CD8-positive, alpha-beta T cell (primary cell): ENCODE measurements at regions of chr5 and their contacts with region 1.

Region 1: GRCh38 chr5:43484106-43484849 is 613 bp upstream of the TMEM267 start:
- DNase-seq: peak; percentile 72 to 92 (median 86)
- ATAC-seq: peak; percentile 67
- H3K4me3 ChIP-seq: peak overlapping the region; percentile 76 to 97
- H3K4me3 Mint-ChIP-seq: peak overlapping the region; percentile 98
- H3K27ac ChIP-seq: peak overlapping the region; percentile 96 to 99
- H3K27ac Mint-ChIP-seq: peak overlapping the region; percentile 100
- H3K4me1 ChIP-seq: peaks cover 30% of the 10 kb centered on the region
- H3K4me1 Mint-ChIP-seq: peaks cover 53% of the 10 kb centered on the region
- H3K27me3 ChIP-seq: no peaks in the 10 kb centered on the region
- H3K27me3 Mint-ChIP-seq: no peaks in the 10 kb centered on the region
- CTCF ChIP-seq: peak; percentile 73

Region 2: GRCh38 chr5:41869739-41870626 is 1614.3 kb before region 1 on chr5 and contains the start of gene OXCT1:
- CTCF ChIA-PET with region 1: no interaction called
- POLR2A ChIA-PET with region 1: no interaction called
- intact Hi-C with region 1: loop called (anchors 5 to 10 kb)
- DNase-seq: peak; percentile 87 to 97 (median 93)
- ATAC-seq: peak; percentile 94
- H3K4me3 ChIP-seq: peak within 1 kb of the TSS; percentile 90 to 98
- H3K4me3 Mint-ChIP-seq: peak within 1 kb of the TSS; percentile 92
- H3K27ac ChIP-seq: peak within 1 kb of the TSS; percentile 87 to 90
- H3K27ac Mint-ChIP-seq: peak within 1 kb of the TSS; percentile 98
- H3K4me1 ChIP-seq: peaks cover 24% of the 10 kb centered on the region
- H3K4me1 Mint-ChIP-seq: peaks cover 48% of the 10 kb centered on the region
- H3K27me3 ChIP-seq: no peaks in the 10 kb centered on the region
- H3K27me3 Mint-ChIP-seq: no peaks in the 10 kb centered on the region
- CTCF ChIP-seq: no peak
- total RNA-seq, gene OXCT1: 16.1 to 19.8 TPM

Region 3: DNA sequence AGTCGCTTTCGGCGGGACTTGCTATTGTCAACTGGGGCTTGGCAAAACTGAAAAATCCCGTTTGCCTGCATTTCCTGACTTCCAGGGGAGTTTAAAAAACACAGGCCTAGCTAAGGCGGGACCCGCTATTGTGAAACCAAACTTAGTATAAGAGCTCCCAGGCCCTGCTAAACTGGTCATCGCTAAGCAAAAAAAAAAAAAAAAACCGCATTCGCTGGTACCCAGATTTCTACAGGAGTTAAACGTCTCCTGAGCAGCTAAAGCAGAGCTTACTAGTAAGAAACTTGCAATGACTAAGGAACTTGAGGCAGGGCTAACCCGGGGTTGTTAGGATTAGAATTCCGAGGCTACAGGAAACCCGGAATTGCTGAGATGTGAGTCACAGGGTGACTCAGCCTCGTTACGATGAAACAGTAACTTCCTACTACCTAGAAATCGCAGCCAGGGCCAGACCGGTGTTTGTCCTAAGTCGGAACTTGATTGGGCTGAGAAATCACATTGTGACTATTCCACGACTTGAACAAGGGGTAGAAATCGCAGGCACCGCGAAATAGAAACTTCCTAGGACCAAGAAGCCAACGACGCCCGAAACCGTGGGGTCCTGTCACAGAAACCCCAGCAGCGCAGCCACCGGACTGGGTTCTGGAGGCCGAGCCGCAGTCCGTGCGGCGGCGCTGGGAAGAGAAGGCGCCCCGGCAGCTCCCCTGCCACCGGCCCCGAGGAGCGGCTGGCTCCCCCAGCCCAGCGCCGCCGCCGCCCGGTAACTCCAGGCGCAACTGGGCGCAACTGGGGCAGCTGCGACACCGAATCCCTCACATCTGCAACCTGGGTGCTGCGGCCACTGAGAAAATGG is 533.6 kb before region 1 on chr5:
- CTCF ChIA-PET with region 1: interaction called, 3 read pairs
- POLR2A ChIA-PET with region 1: interaction called, 17 read pairs
- intact Hi-C with region 1: no loop called
- DNase-seq: peak; percentile 26 to 90 (median 72)
- ATAC-seq: peak; percentile 43
- H3K4me3 ChIP-seq: peak overlapping the region; percentile 72 to 83
- H3K4me3 Mint-ChIP-seq: peak overlapping the region; percentile 94
- H3K27ac ChIP-seq: peak overlapping the region; percentile 93 to 94
- H3K27ac Mint-ChIP-seq: peak overlapping the region; percentile 99
- H3K4me1 ChIP-seq: peaks cover 20% of the 10 kb centered on the region
- H3K4me1 Mint-ChIP-seq: peaks cover 34% of the 10 kb centered on the region
- H3K27me3 ChIP-seq: no peaks in the 10 kb centered on the region
- H3K27me3 Mint-ChIP-seq: no peaks in the 10 kb centered on the region
- CTCF ChIP-seq: no peak

Region 4: DNA sequence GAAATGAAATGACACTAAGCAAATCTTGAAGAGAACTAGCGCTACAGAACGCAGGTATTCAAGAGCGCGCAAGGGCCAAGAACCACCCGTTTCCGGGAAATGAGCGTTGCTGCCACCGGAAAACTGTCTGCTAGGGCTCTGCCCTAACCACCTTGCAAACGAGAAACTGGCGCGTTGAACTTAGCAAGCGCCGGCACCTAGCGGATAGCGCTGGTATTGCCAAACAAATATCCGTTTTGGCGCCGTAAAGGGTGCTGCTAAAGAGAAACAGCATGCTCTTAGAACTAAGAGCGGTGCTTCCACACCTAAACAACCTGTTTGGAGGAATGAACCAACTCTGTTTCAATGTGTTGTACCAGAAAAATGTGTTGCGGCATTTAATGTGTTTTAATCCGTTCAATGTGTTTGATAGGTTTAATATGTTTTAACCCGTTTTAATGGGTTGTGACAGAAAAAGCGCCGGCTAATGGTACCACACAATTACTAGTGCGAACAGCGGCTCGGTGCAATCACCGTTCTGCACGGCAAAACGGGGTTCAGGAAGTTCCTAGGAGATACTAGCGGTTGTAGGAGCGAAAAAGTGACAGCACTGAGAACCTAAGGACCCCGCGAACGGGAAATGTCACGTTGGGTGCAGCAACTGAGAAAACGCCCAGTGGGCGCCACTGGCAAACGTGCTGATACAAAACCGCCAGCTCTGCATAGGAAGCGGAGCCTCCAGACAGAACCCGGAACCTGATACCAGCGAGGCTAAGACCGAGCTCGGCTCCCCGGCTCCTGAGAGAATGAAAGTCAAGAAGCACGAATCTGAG is 443.8 kb before region 1 on chr5 and contains the start of gene ANXA2R:
- CTCF ChIA-PET with region 1: interaction called, 3 read pairs
- POLR2A ChIA-PET with region 1: interaction called, 38 read pairs
- intact Hi-C with region 1: loop called in 1 of 2 experiments (anchors 1 kb)
- DNase-seq: peak; percentile 88 to 98 (median 93)
- ATAC-seq: peak; percentile 58
- H3K4me3 ChIP-seq: peak within 1 kb of the TSS; percentile 86 to 87
- H3K4me3 Mint-ChIP-seq: peak within 1 kb of the TSS; percentile 93
- H3K27ac ChIP-seq: peak within 1 kb of the TSS; percentile 93 to 94
- H3K27ac Mint-ChIP-seq: peak within 1 kb of the TSS; percentile 98
- H3K4me1 ChIP-seq: peaks cover 27% of the 10 kb centered on the region
- H3K4me1 Mint-ChIP-seq: peaks cover 56% of the 10 kb centered on the region
- H3K27me3 ChIP-seq: no peaks in the 10 kb centered on the region
- H3K27me3 Mint-ChIP-seq: no peaks in the 10 kb centered on the region
- CTCF ChIP-seq: peak; percentile 79
- total RNA-seq, gene ANXA2R: 38.2 to 39.5 TPM

Region 5: DNA sequence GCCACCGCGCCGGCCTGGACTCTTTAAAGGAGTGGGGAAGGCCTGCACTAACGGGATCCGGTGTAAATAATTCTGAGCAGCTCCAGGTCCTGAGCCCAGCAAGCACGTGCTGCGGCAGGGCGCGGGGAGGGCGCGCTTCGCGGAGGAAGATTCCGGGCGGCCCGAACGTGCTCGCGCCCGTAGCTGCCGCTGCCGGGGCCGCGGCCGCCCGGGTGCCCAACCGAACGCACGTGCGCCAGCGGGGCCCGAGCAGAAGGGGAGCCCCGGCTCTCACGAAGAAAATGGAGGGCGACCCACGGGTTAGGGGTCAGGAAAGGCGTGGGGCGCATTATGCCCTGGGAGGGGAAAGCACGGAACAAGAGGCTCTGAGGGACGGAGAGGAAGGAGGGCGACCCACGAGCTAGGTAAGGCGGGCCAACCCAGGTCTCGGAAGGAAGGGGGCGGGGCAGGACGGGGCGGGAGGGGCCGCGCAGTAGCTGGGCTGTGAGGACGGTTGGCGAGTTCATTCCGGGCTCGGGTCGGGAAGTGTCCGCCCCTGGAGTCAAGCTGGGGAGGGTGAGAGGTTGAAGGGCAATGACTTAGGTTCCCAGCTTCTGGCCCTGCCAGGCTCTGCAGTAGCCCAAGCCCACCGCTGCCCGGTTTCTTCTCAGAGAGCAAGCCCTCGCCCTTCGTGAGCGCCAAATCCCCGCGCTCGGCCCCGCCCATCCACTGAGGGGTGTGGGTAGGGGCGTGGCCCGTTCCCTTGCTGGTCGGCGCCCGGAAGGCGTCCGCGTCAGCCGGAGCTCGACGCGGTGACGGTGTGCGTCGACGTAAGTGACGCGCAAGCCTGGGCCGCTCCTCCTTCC is 363.3 kb before region 1 on chr5 and contains the start of gene ZNF131:
- CTCF ChIA-PET with region 1: interaction called, 6 read pairs
- POLR2A ChIA-PET with region 1: interaction called, 63 read pairs
- intact Hi-C with region 1: loop called (anchors 1 to 2 kb)
- DNase-seq: peak; percentile 95 to 99 (median 97)
- ATAC-seq: peak; percentile 87
- H3K4me3 ChIP-seq: peak within 1 kb of the TSS; percentile 74 to 82
- H3K4me3 Mint-ChIP-seq: peak within 1 kb of the TSS; percentile 96
- H3K27ac ChIP-seq: peak within 1 kb of the TSS; percentile 87 to 98
- H3K27ac Mint-ChIP-seq: peak within 1 kb of the TSS; percentile 98
- H3K4me1 ChIP-seq: peaks cover 34% of the 10 kb centered on the region
- H3K4me1 Mint-ChIP-seq: peaks cover 39% of the 10 kb centered on the region
- H3K27me3 ChIP-seq: no peaks in the 10 kb centered on the region
- H3K27me3 Mint-ChIP-seq: no peaks in the 10 kb centered on the region
- CTCF ChIP-seq: no peak
- total RNA-seq, gene ZNF131: 76.7 to 84.9 TPM

Region 6: GRCh38 chr5:43453606-43454005 is 30.7 kb before region 1 on chr5:
- CTCF ChIA-PET with region 1: no interaction called
- POLR2A ChIA-PET with region 1: interaction called, 11 read pairs
- intact Hi-C with region 1: no loop called
- DNase-seq: no peak
- ATAC-seq: no peak
- H3K4me3 ChIP-seq: no peak overlapping the region
- H3K4me3 Mint-ChIP-seq: no peak overlapping the region
- H3K27ac ChIP-seq: no peak overlapping the region
- H3K27ac Mint-ChIP-seq: no peak overlapping the region
- H3K4me1 ChIP-seq: no peaks in the 10 kb centered on the region
- H3K4me1 Mint-ChIP-seq: no peaks in the 10 kb centered on the region
- H3K27me3 ChIP-seq: no peaks in the 10 kb centered on the region
- H3K27me3 Mint-ChIP-seq: no peaks in the 10 kb centered on the region
- CTCF ChIP-seq: no peak

Region 7: GRCh38 chr5:43556857-43557542 is 72.7 kb after region 1 on chr5 and contains the start of gene PAIP1:
- CTCF ChIA-PET with region 1: interaction called, 7 read pairs
- POLR2A ChIA-PET with region 1: interaction called, 69 read pairs
- intact Hi-C with region 1: loop called (anchors 1 kb)
- DNase-seq: peak; percentile 67 to 92 (median 83)
- ATAC-seq: peak; percentile 81
- H3K4me3 ChIP-seq: peak within 1 kb of the TSS; percentile 73 to 88
- H3K4me3 Mint-ChIP-seq: peak within 1 kb of the TSS; percentile 90
- H3K27ac ChIP-seq: peak within 1 kb of the TSS; percentile 82 to 93
- H3K27ac Mint-ChIP-seq: peak within 1 kb of the TSS; percentile 97
- H3K4me1 ChIP-seq: peaks cover 45% of the 10 kb centered on the region
- H3K4me1 Mint-ChIP-seq: peaks cover 13% of the 10 kb centered on the region
- H3K27me3 ChIP-seq: no peaks in the 10 kb centered on the region
- H3K27me3 Mint-ChIP-seq: peaks cover 2% of the 10 kb centered on the region
- CTCF ChIP-seq: peak; percentile 77
- total RNA-seq, gene PAIP1: 40.3 to 45.7 TPM